Mammary epithelial cell (primary cell): ENCODE measurements at regions of chr7 and their contacts with region 1.

Region 1: DNA sequence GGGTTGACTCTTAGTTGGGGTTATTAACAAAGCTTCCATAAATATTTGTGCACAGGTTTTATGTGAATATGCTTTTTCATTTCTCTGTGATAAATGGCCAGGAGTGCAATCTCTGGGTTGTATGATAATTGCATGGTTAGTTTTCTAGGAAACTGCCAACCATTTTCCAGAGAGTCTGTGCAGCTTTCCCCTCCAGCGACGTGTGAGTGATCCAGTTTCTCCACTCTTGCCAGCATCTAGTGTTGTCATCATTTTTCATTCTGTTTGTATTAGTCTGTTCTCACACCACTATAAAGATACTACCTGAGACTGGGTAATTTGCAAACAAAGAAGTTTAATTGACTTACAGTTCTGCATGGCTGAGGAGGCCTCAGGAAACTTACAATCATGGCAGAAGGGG is 319.6 kb upstream of the SHH start:
- DNase-seq: no peak
- H3K4me3 ChIP-seq: no peak overlapping the region
- H3K27ac ChIP-seq: no peak overlapping the region
- H3K4me1 ChIP-seq: no peaks in the 10 kb centered on the region
- H3K27me3 ChIP-seq: no peaks in the 10 kb centered on the region
- CTCF ChIP-seq: no peak

Region 2: GRCh38 chr7:156180452-156181229 is 48.8 kb after region 1 on chr7:
- CTCF ChIA-PET with region 1: no interaction called
- dilution Hi-C with region 1: loop called (anchors 5 kb)
- in situ Hi-C with region 1: no loop called
- intact Hi-C with region 1: no loop called
- DNase-seq: no peak
- H3K4me3 ChIP-seq: no peak overlapping the region
- H3K27ac ChIP-seq: no peak overlapping the region
- H3K4me1 ChIP-seq: no peaks in the 10 kb centered on the region
- H3K27me3 ChIP-seq: no peaks in the 10 kb centered on the region
- CTCF ChIP-seq: no peak